ENCODE measurements at regions of chr17 and their contacts with region 1.

Region 1: DNA sequence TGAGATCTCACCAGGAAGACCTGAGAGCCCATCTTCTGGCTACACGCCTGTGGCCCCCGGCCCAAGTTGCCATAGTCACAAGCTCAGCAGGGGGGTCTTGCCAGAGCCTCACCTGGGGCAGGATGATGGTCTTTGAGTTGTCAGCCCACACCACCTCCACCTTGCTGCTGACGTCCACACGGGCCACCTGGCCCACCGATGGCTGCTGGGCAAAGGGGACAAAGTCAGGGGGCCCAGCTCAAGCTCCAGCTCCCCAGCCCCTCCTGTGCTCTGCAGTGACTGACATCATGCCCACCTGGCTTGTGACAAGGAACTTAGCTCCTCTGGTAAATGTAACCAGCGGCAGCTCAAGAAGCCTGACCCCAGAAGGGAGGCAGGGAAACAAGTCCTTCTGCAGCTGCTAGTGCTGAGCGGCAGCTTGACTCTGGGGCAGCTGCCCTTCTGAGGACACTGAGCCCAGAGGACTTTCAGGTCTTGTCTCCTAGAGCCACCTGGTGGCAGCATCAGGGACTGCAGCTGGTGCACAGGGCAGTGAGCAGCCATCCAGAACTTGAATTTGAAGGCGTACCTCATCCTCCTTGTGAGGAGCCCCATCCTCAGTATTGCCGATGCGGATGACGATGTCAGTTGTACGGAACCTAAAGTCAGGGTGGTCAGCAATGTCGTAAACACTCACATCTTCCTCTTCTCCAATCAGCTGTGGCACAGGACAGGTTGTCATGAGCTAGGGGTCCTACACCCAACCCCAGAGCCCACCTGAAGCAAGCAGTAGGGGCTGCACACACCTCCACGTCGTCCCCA is 13.5 kb downstream of the SPHK1 start:
- DNase-seq: peak in 3 of 4 donors; percentile 87 to 96 (median 91)
- ATAC-seq: peak; percentile 93
- H3K4me3 ChIP-seq: no peak overlapping the region
- H3K27ac ChIP-seq: no peak overlapping the region
- H3K4me1 ChIP-seq: peaks cover 0 to 7% of the 10 kb centered on the region in 2 donors
- H3K27me3 ChIP-seq: no peaks in the 10 kb centered on the region
- CTCF ChIP-seq: peak; percentile 99 to 100

Region 2: GRCh38 chr17:76304226-76305134 is 93.4 kb before region 1 on chr17:
- intact Hi-C with region 1: loop called in 1 of 2 experiments (anchors 2 kb)
- DNase-seq: peak in 1 of 4 donors; percentile 55
- ATAC-seq: no peak
- H3K4me3 ChIP-seq: no peak overlapping the region
- H3K27ac ChIP-seq: no peak overlapping the region
- H3K4me1 ChIP-seq: no peaks in the 10 kb centered on the region
- H3K27me3 ChIP-seq: no peaks in the 10 kb centered on the region
- CTCF ChIP-seq: no peak

Region 3: DNA sequence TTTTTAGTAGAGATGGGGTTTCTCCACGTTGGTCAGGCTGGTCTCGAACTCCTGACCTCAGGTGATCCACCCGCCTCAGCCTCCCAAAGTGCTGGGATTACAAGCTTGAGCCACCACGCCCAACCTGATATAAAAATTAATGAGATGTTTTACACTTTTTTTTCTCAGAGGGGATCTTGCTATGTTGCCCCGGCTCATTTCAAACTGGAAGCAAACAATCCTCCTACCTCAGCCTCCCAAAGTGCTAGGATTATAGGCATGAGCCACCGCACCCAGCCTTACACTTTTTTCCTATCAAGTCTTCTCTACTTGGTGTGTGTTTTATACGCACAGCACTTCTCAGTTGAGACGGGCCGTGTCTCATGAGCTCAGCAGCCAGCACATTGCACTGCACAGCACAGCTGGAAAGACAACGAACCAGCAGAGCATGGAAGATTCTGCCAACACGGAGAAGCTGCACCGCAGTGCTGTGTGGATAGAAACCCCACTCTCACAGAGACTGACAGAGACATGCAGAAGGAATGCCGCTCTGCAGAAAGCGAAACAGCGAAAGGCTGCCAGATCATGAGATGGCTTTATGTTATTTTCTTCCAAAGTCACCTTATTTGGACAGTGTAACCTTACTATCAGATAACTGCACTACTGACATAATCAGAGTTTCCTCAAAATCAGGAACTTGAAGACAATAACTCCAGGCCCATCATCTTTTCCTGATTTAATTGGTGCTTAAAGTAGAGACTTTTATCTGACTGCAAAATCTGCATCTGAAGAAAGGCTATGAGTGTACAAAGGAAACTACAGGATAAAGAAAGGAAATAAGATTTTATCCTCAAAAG is 83.3 kb before region 1 on chr17:
- intact Hi-C with region 1: no loop called
- DNase-seq: peak in 1 of 4 donors; percentile 12
- ATAC-seq: peak; percentile 18
- H3K4me3 ChIP-seq: no peak overlapping the region
- H3K27ac ChIP-seq: peak overlapping the region; percentile 7 to 24
- H3K4me1 ChIP-seq: no peaks in the 10 kb centered on the region
- H3K27me3 ChIP-seq: no peaks in the 10 kb centered on the region
- CTCF ChIP-seq: no peak

Measured in left lung (tissue), 14 donors.